Thyroid gland (tissue), 4 donors: ENCODE measurements at regions of chr2 and their contacts with region 1.

Region 1: DNA sequence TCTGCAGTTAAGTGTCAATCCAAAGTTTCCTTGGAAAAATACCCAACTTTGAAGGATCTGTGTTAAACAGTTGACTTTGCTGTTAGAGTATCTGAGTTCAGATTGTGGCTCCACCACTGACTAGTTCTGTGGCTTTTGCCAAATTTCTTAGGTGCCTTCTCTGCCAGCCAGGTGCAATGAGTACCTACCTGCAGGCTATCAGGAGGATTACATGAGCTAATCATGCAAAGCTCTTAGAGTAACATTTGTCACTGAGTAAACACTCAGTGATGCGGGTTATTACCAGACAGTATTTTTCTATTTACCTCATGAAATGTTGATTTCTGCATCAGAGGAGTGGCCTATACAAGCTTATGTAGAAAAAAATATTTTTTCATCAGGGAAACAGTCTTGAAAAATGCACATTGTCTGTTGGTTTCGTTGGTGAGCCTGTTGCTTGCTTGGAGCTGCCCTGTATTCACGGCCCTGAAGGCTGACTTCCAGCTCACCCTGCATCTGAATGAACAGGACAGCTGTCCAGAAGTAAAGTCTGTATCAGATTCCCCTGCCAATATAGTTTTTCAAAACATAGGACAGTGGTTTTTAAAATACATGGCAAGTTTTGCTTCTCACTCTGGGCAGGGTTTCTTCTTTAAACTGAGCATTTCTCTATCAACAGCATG is 235.1 kb downstream of the CDCA7 start:
- DNase-seq: peak; percentile 37 to 53
- H3K4me3 ChIP-seq: no peak overlapping the region
- H3K27ac ChIP-seq: peak overlapping the region; percentile 53 to 77 (median 68)
- H3K4me1 ChIP-seq: peaks cover 19 to 23% of the 10 kb centered on the region in 2 donors
- H3K27me3 ChIP-seq: no peaks in the 10 kb centered on the region
- CTCF ChIP-seq: no peak
- POLR2A ChIP-seq: no peak

Region 2: GRCh38 chr2:173854840-173855239 is 265.1 kb after region 1 on chr2:
- intact Hi-C with region 1: loop called (anchors 5 kb)
- DNase-seq: peak in 1 of 2 donors; percentile 47
- H3K4me3 ChIP-seq: no peak overlapping the region
- H3K27ac ChIP-seq: peak overlapping the region in 2 of 3 donors; percentile 59 to 63
- H3K4me1 ChIP-seq: peaks cover 45 to 61% of the 10 kb centered on the region in 2 donors
- H3K27me3 ChIP-seq: no peaks in the 10 kb centered on the region
- CTCF ChIP-seq: no peak
- POLR2A ChIP-seq: no peak